ENCODE measurements at regions of chr2 and their contacts with region 1.

Region 1: DNA sequence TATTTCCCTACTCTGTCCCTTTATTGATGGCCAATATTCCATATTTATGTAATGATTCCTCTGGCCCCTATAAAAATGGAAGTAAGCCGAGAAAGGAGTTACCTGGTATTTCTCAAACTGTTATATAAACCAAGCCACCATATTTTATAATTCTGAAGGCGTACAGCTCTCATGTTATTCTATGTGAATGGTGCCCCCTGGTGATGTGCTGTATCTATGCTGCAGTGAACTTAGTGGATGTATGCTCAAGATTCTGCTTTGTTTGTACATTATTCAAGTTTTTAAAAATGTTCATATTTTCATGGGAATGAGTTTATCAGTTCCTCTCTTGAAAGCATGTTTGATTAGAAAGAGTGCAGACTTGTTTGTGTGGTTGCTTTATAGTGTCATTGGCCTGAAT is 194.5 kb upstream of the LRRTM1 start:
- DNase-seq: peak; percentile 56
- ATAC-seq: peak; percentile 55; the same call in 1 of the 2 replicates
- H3K4me3 ChIP-seq: no peak overlapping the region
- H3K27ac ChIP-seq: no peak overlapping the region
- H3K4me1 ChIP-seq: peaks cover 14% of the 10 kb centered on the region
- H3K27me3 ChIP-seq: no peaks in the 10 kb centered on the region; the same call in 1 of the 2 replicates
- CTCF ChIP-seq: peak; percentile 85

Region 2: DNA sequence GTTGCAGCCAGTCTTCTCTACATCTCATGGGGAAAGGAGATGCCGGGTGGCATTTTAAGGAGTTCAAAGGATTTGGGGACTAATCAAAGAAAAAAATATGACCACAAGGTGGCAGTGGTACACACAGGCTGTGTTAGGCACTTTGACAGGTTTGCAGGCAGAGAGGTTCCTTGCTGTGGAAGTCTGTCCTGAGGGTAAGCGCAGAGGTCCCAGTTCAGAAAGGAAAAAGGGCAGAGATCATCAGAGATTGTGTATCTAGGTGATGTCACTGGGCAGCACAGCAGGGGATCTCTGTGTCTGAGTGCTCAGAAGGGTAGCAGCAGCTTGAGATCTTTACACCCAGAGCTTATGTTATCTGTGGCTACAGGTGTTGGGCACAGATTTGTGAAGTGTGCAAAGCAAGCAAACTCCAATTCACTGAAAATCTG is 425.9 kb before region 1 on chr2:
- CTCF ChIA-PET with region 1: no interaction called
- POLR2A ChIA-PET with region 1: no interaction called
- intact Hi-C with region 1: loop called (anchors 5 kb)
- DNase-seq: peak; percentile 67
- ATAC-seq: peak; percentile 53; the same call in 1 of the 2 replicates
- H3K4me3 ChIP-seq: no peak overlapping the region
- H3K27ac ChIP-seq: no peak overlapping the region
- H3K4me1 ChIP-seq: no peaks in the 10 kb centered on the region
- H3K27me3 ChIP-seq: 0 out of 2 replicates have a peak, but pooled peaks cover 8% of the 10 kb centered on the region
- CTCF ChIP-seq: peak; percentile 76

Region 3: GRCh38 chr2:80326214-80326613 is 172.9 kb before region 1 on chr2:
- CTCF ChIA-PET with region 1: interaction called, 3 read pairs
- POLR2A ChIA-PET with region 1: no interaction called
- intact Hi-C with region 1: loop called (anchors 1 kb)
- DNase-seq: peak; percentile 8
- ATAC-seq: no peak
- H3K4me3 ChIP-seq: no peak overlapping the region
- H3K27ac ChIP-seq: no peak overlapping the region
- H3K4me1 ChIP-seq: no peaks in the 10 kb centered on the region
- H3K27me3 ChIP-seq: peaks cover 26% of the 10 kb centered on the region; the same call in 1 of the 2 replicates
- CTCF ChIP-seq: peak; percentile 56

Measured in PC-3 (cell line).